Psoas muscle (tissue), 8 donors: ENCODE measurements at regions of chr2 and their contacts with region 1.

Region 1: DNA sequence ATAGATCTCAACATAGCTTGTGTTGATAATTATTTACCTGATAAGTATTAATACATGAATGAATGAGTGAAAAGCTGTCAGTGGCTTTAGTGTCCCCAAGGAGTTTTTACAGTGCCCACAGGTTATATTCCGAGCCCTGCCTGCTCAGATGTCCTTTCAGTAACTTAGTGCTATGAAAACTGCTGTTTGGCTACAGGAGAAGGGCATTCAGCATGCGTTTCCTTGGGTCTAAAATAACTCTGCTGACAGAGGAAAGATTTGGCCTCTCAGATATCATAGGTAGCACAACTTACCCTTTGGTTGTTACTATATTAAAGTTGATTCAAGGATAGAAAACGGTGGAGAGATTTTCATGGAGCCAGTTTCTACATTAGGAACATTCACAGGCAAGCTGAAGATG is 241.0 kb downstream of the ETAA1 start:
- DNase-seq: no peak
- ATAC-seq: peak; percentile 42 to 93 (median 88)
- H3K4me3 ChIP-seq: no peak overlapping the region
- H3K27ac ChIP-seq: peak overlapping the region; percentile 38
- H3K4me1 ChIP-seq: peaks cover 8% of the 10 kb centered on the region
- H3K27me3 ChIP-seq: no peaks in the 10 kb centered on the region
- CTCF ChIP-seq: no peak

Region 2: GRCh38 chr2:66030553-66030952 is 1607.6 kb before region 1 on chr2:
- intact Hi-C with region 1: loop called in 1 of 2 experiments (anchors 5 kb)
- DNase-seq: no peak
- ATAC-seq: no peak
- H3K4me3 ChIP-seq: no peak overlapping the region
- H3K27ac ChIP-seq: no peak overlapping the region
- H3K4me1 ChIP-seq: peaks cover 7% of the 10 kb centered on the region
- H3K27me3 ChIP-seq: no peaks in the 10 kb centered on the region
- CTCF ChIP-seq: no peak

Region 3: DNA sequence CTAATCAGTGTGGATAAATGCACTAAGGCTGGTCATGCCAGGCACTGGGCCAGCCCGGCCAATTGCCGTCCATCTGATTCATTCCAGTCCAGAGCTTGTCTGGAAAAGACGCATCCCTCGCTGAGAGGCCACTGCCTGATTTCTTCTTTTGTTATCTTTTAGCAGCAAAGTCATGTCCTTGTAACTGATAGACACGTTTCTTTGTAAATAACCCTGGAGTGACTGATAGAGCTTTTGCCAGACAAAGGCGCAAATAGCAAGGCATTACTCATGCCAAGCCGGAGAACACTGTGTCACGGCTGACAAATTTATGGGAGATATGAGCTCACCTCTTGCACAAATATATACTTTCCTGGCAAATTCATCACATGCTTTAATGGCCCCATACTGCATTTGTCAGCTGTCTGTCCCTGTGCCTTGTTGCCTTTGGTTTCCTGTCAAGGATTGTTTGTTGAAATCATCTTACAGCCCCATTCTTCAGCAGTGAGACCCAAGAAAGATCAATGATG is 76.6 kb before region 1 on chr2:
- intact Hi-C with region 1: loop called in 1 of 2 experiments (anchors 5 kb)
- DNase-seq: peak in 1 of 2 donors; percentile 46
- ATAC-seq: peak in 2 of 4 donors; percentile 80 to 91
- H3K4me3 ChIP-seq: no peak overlapping the region
- H3K27ac ChIP-seq: no peak overlapping the region
- H3K4me1 ChIP-seq: peaks cover 5% of the 10 kb centered on the region
- H3K27me3 ChIP-seq: no peaks in the 10 kb centered on the region
- CTCF ChIP-seq: no peak